Breast epithelium (tissue), 4 donors: ENCODE measurements at regions of chrX and their contacts with region 1.

Region 1: DNA sequence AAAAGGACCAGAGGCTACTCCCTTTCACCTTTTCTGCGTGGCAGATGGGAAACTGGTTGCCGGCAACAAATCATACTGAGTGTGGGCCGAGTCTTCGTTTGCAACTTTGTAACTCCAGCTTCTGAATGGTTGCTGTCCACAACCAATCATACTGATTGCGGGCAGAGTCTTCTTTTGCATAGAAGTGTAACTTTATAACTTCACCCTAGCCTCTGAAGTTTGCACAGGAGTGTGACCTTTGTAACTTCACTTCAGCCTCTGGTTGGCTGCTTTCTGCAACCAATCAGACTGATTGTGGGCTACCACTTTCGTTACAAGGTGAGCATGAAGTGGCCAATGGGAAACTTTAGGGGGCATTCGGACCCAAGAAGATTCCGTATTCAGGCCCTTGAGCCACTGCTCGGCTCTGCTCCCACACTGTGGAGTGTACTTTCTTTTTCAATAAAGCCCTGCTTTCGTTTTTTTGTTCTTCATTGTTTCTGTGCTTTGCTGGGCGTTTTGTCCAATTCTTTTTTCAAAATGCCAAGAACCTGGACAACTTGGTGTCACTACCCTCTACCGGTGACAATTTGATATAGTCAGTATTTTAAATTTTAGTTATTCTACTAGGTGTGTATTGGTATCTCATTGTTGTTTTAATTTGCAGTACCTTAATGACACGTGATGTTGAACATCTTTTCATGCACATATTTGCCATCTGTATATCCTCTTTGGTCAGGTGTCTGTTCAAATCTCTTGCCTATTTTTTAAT is 9.0 kb upstream of the PAGE5 start:
- DNase-seq: no peak
- H3K4me3 ChIP-seq: no peak overlapping the region
- H3K27ac ChIP-seq: no peak overlapping the region
- H3K4me1 ChIP-seq: no peaks in the 10 kb centered on the region
- H3K27me3 ChIP-seq: peaks cover 0 to 13% of the 10 kb centered on the region in 2 donors
- CTCF ChIP-seq: no peak
- POLR2A ChIP-seq: no peak

Region 2: DNA sequence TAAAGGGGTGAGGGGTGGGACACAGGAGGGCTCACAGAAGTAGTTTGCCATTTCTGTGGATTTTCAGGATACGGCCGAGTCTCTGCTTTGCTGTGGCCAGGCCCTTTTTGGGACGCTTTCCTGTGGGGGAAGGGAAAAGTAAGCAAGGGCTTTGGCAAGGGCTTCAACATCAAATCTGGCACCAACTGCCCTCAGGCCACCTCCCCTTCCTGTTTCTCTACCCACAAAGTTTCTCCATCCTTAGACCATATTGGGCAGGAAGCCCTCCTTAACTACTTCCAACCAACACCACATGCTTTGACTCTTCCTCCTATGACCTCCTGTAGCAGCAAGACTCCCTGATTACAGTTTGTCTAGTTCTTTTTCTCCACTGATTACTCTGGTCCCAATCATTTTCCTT is 1272.0 kb before region 1 on chrX:
- intact Hi-C with region 1: no loop called
- DNase-seq: no peak
- H3K4me3 ChIP-seq: no peak overlapping the region
- H3K27ac ChIP-seq: no peak overlapping the region
- H3K4me1 ChIP-seq: no peaks in the 10 kb centered on the region
- H3K27me3 ChIP-seq: peaks cover 0 to 11% of the 10 kb centered on the region in 2 donors
- CTCF ChIP-seq: no peak
- POLR2A ChIP-seq: no peak

Region 3: DNA sequence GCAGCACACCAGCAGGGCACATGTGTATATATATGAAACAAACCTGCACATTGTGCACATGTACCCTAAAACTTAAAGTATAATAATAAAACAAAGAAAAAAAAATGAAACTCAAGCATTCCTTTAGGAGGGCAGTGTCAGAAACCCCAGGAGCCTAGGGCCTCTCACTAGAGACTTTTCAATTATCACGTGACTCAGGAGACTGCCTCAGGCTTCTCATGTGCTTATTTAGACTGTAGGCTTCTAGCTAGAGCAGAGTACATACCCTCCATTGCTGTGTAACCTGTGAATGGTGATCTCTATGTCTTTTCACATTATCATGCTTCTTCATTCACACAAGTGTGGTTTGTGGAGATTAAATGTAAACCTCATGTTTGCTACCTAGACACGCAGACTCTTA is 192.6 kb after region 1 on chrX:
- intact Hi-C with region 1: no loop called
- DNase-seq: no peak
- H3K4me3 ChIP-seq: no peak overlapping the region
- H3K27ac ChIP-seq: no peak overlapping the region
- H3K4me1 ChIP-seq: no peaks in the 10 kb centered on the region
- H3K27me3 ChIP-seq: peaks cover 0 to 16% of the 10 kb centered on the region in 2 donors
- CTCF ChIP-seq: no peak
- POLR2A ChIP-seq: no peak

Region 4: GRCh38 chrX:56120242-56120641 is 909.1 kb after region 1 on chrX:
- intact Hi-C with region 1: loop called (anchors 5 kb)
- DNase-seq: no peak
- H3K4me3 ChIP-seq: no peak overlapping the region
- H3K27ac ChIP-seq: no peak overlapping the region
- H3K4me1 ChIP-seq: no peaks in the 10 kb centered on the region
- H3K27me3 ChIP-seq: peaks cover 0 to 15% of the 10 kb centered on the region in 2 donors
- CTCF ChIP-seq: no peak
- POLR2A ChIP-seq: no peak

Region 5: DNA sequence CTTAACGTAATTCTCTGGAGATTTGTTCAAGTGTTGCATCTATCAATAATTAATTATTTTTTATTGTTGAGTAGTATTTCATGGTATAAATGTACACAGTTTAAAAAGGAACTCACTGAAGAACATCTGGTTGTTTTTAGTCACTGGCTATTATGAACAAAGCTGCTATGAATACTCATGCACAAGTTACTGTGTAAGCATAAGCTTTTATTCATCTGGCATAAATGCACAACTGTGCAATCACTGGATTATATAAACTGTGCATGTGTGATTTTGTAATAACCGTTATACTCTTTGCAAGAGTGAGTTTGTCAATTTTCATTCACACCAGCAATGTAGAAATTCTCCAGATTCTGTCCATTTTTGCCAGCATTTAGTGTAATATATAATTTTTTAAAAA is 1308.5 kb after region 1 on chrX:
- intact Hi-C with region 1: loop called (anchors 10 kb)
- DNase-seq: no peak
- H3K4me3 ChIP-seq: no peak overlapping the region
- H3K27ac ChIP-seq: no peak overlapping the region
- H3K4me1 ChIP-seq: no peaks in the 10 kb centered on the region
- H3K27me3 ChIP-seq: peaks cover 0 to 5% of the 10 kb centered on the region in 2 donors
- CTCF ChIP-seq: no peak
- POLR2A ChIP-seq: no peak